Activated CD8-positive, alpha-beta T cell treated with anti-CD3 and anti-CD28 coated beads for 36 hours (primary cell): ENCODE measurements at regions of chr19 and their contacts with region 1.

Region 1: GRCh38 chr19:15318241-15318691 is 14.1 kb downstream of the BRD4 start:
- DNase-seq: peak; percentile 45
- ATAC-seq: peak; percentile 60
- H3K4me3 Mint-ChIP-seq: peak overlapping the region; percentile 7
- H3K27ac Mint-ChIP-seq: peak overlapping the region; percentile 76
- H3K4me1 Mint-ChIP-seq: peaks cover 84% of the 10 kb centered on the region
- H3K27me3 Mint-ChIP-seq: no peaks in the 10 kb centered on the region
- CTCF ChIP-seq: no peak

Region 2: DNA sequence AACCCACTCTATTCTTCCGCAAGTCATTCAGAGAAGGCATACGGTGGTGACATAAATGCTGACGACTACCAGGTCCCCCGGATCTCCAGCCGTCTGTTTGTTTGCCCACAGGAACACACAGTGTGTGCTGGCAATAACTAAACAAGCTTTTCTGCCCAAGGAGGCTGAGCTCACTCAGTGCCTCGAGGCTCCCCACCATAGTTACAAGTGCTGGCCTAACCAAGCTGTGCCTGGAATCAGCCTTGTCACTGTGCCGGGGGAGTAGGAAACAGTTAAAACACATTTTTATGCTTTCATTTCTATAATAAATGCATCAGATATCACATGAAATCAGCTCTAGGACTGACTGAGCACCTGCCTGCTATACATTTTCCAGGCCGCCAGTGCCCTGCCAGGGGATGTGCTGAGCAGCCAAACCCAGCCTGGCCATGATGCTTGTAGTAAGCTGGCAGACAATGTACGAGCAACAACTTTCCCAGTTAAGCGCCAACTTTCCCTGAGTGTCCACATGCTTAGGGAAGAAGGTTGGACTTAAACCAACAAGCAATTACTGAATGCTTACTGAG is 14.0 kb before region 1 on chr19:
- CTCF ChIA-PET with region 1: interaction called, 5 read pairs
- POLR2A ChIA-PET with region 1: interaction called, 14 read pairs
- intact Hi-C with region 1: no loop called
- DNase-seq: peak; percentile 52
- ATAC-seq: peak; percentile 50
- H3K4me3 Mint-ChIP-seq: no peak overlapping the region
- H3K27ac Mint-ChIP-seq: peak overlapping the region; percentile 72
- H3K4me1 Mint-ChIP-seq: peaks cover 73% of the 10 kb centered on the region
- H3K27me3 Mint-ChIP-seq: no peaks in the 10 kb centered on the region
- CTCF ChIP-seq: no peak